GM12878 (cell line): ENCODE measurements at regions of chr6 and their contacts with region 1.

Region 1: DNA sequence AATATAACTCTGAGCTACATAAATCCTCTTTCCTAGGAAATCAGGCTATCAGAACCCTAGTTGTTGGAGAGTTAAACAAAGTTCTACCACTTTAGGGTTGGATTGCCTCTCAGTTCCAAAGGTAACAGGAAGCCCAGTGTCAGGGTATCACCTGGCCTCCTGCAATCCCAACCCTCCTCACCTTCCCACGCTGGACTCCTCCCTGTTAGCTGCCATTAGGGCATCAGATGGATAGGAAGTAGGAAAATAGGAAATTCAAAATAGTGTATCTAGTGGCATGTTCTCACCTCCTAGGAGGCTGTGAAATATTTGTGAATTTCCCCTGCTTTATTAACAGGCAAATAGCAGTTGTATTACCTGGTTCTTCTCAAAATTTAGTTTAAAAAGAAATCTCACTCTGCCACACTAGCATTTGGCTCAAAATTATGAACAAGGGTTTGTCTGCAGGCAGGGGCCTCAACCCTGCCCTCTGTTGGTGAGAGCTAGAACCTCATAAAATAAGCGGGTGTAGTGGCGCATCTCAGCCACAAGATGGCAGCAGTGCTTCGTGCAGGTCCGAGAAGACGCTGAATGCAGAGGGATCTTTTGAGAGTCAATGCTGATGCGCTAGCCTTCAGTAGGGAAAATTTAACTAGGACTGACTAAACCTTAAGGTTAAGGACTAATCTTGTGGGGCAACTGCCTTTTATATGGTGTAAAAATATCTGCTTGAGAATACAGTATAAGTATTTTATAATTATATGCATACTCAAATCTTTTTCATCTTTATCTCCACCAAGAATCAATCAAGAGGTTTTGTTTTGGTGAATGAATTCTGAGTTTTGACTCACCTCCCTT is 209.8 kb upstream of the KCNQ5 start:
- DNase-seq: peak; percentile 59
- ATAC-seq: peak; percentile 87
- H3K4me3 ChIP-seq: no peak overlapping the region
- H3K27ac ChIP-seq: no peak overlapping the region
- H3K4me1 ChIP-seq: no peaks in the 10 kb centered on the region
- H3K27me3 ChIP-seq: peaks cover 1 to 3% of the 10 kb centered on the region in 2 experiments; a peak in 2 of 4 replicates
- CTCF ChIP-seq: peak; percentile 100; a peak in 5 of 6 replicates
- EP300 ChIP-seq: no peak
- POLR2A ChIP-seq: no peak
- RAD21 ChIP-seq: peak; percentile 98

Region 2: GRCh38 chr6:72401865-72402264 is 10.2 kb before region 1 on chr6:
- CTCF ChIA-PET with region 1: interaction called, 12 read pairs
- POLR2A ChIA-PET with region 1: no interaction called
- RAD21 ChIA-PET with region 1: no interaction called
- SMC1A ChIA-PET with region 1: interaction called, 3 read pairs
- in situ Hi-C with region 1: no loop called
- intact Hi-C with region 1: no loop called
- DNase-seq: no peak
- ATAC-seq: no peak
- H3K4me3 ChIP-seq: no peak overlapping the region
- H3K27ac ChIP-seq: no peak overlapping the region
- H3K4me1 ChIP-seq: no peaks in the 10 kb centered on the region; the same call in 1 of the 2 replicates
- H3K27me3 ChIP-seq: no peaks in the 10 kb centered on the region
- CTCF ChIP-seq: no peak
- EP300 ChIP-seq: no peak
- POLR2A ChIP-seq: no peak
- RAD21 ChIP-seq: no peak

Region 3: DNA sequence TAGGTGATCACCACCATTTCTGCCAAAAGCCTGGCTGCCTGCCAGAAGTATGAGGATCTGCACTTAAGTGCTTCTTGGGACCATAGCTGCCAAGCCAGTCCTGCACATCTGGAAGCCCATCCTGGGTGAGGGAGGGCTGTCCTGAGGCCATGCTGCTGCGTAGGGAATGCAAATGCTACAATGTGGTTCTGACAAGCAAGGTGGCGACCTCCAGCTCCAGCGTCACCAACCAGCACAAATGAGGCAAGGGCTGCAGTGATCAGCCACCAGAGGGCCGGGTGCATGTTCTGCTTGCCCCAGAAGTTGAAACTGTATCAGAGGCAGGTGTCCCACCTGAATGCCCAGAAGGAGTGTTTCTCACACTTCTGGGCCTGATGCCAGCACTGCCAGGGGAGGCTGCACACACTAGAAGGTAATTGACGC is 110.6 kb after region 1 on chr6:
- CTCF ChIA-PET with region 1: interaction called, 13 read pairs
- POLR2A ChIA-PET with region 1: no interaction called
- RAD21 ChIA-PET with region 1: no interaction called
- SMC1A ChIA-PET with region 1: no interaction called
- in situ Hi-C with region 1: no loop called
- intact Hi-C with region 1: no loop called
- DNase-seq: no peak
- ATAC-seq: peak; percentile 86
- H3K4me3 ChIP-seq: no peak overlapping the region
- H3K27ac ChIP-seq: no peak overlapping the region
- H3K4me1 ChIP-seq: no peaks in the 10 kb centered on the region
- H3K27me3 ChIP-seq: no peaks in the 10 kb centered on the region; a peak in 1 of 4 replicates
- CTCF ChIP-seq: peak; percentile 32 to 55 (median 50)
- EP300 ChIP-seq: no peak
- POLR2A ChIP-seq: no peak
- RAD21 ChIP-seq: 0 out of 2 replicates have a peak, but pooled peaks have one; percentile 18

Region 4: DNA sequence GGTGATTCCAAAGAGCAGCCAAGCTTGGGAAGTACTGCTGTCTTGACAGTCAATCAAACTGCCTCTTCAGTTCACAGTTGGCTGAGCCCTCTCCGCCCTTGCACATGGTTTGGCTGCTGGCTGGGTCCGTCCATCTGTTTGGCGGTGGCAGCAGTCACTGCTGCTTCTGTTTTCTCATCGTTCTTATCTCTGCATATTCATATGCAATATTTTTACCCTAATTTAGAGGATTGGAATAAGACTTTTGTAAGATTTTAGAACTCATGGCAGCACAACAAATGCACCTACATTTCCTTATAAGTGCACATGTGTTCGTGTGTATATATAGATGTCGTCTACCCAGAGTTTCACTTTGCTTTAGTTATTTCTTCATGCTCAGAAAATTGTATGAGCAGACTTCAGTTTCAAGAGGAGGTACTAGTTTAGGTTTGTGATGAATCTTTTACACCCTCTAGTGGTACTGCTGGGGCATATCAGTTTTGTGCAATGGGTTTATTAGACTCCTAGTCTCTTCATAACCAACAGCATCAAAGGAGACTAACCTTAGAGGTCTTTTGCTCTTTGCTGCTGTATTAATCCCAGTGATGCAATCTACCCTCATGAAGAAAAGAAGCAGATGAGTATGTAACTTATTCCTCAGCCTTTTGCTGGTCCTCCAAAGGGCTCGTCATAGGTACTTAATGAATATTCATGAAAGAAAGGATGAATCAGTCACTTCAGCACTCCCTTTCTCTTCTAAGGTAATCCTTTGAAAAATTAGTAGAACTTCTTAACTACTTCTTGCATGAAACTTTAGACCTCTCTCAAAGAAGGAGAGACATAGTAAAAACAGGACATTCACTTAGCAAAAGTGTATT is 768.9 kb after region 1 on chr6:
- CTCF ChIA-PET with region 1: interaction called, 41 read pairs
- POLR2A ChIA-PET with region 1: no interaction called
- RAD21 ChIA-PET with region 1: interaction called, 3 read pairs
- SMC1A ChIA-PET with region 1: interaction called, 13 read pairs
- in situ Hi-C with region 1: loop called (anchors 5 kb)
- intact Hi-C with region 1: loop called (anchors 1 kb)
- DNase-seq: peak; percentile 53
- ATAC-seq: peak; percentile 94
- H3K4me3 ChIP-seq: peak overlapping the region; percentile 25; the same call in 1 of the 2 replicates
- H3K27ac ChIP-seq: no peak overlapping the region
- H3K4me1 ChIP-seq: peaks cover 23% of the 10 kb centered on the region
- H3K27me3 ChIP-seq: no peaks in the 10 kb centered on the region
- CTCF ChIP-seq: peak; percentile 79 to 91 (median 85)
- EP300 ChIP-seq: no peak
- POLR2A ChIP-seq: no peak
- RAD21 ChIP-seq: peak; percentile 97

Region 5: GRCh38 chr6:73388800-73389512 is 976.9 kb after region 1 on chr6:
- CTCF ChIA-PET with region 1: interaction called, 3 read pairs
- POLR2A ChIA-PET with region 1: no interaction called
- RAD21 ChIA-PET with region 1: no interaction called
- SMC1A ChIA-PET with region 1: interaction called, 10 read pairs
- in situ Hi-C with region 1: no loop called
- intact Hi-C with region 1: no loop called
- DNase-seq: no peak
- ATAC-seq: peak; percentile 92
- H3K4me3 ChIP-seq: peak overlapping the region; percentile 51
- H3K27ac ChIP-seq: no peak overlapping the region
- H3K4me1 ChIP-seq: no peaks in the 10 kb centered on the region
- H3K27me3 ChIP-seq: no peaks in the 10 kb centered on the region
- CTCF ChIP-seq: peak; percentile 60 to 80 (median 65)
- EP300 ChIP-seq: no peak
- POLR2A ChIP-seq: peak; percentile 33; the same call in 1 of the 2 replicates
- RAD21 ChIP-seq: peak; percentile 65